Right ventricle myocardium superior (tissue), 1 donor: ENCODE measurements at regions of chr9 and their contacts with region 1.

Region 1: DNA sequence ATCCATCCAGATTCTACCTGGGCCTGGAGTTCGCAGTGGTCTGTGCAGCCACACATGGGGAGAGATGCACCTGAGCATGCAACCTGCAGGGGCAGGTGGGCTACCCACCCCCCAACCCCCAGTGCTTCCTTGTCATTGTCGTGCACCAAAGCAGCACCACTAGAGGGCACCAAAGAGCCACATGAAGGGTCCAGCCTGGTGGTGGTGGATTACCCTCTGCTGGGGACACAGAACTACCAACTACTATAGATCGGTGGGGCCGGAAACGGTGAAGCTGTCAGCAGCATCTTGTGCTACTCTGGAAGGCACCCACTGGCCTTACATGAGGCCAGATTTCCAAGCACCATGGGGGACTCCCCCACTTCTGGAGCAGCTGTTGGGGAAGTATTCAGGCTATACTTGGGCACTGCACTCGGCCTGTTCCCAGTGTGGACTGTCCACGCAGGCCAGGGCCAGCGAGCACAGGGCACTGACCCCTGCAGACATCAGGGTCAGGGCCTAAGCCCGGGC is 60.2 kb upstream of the TBC1D2 start:
- DNase-seq: peak; percentile 82
- ATAC-seq: peak; percentile 95

Region 2: DNA sequence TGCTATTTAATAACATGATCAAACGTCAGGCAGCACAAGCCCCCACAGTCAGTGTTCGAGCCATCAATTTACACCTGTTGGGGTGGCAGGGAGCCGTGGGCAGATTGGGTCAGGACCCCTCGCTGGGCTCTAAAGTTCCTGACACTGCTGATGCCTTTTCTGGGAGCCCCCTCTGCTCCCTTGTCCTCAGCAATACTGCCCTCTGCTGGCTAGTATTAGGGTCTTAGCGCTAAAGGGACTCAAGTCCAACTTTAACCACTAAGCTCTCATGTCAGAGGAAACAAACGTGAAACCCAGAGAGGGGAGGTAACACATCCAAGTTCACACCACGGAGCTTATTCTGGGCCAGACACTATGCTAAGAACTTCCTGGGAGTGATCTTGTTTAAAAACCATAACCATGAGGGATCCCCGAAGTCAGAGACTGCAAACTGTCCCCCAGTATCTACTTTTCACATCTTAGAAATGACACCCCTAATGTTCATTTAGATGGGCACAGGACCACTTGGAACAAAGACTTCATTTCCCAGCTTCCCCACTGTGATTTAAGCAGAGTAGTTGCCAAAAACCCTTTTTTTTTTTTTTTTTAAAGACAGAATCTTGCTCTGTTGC is 460.3 kb after region 1 on chr9:
- intact Hi-C with region 1: loop called (anchors 2 kb)
- DNase-seq: no peak
- ATAC-seq: peak; percentile 70

Region 3: DNA sequence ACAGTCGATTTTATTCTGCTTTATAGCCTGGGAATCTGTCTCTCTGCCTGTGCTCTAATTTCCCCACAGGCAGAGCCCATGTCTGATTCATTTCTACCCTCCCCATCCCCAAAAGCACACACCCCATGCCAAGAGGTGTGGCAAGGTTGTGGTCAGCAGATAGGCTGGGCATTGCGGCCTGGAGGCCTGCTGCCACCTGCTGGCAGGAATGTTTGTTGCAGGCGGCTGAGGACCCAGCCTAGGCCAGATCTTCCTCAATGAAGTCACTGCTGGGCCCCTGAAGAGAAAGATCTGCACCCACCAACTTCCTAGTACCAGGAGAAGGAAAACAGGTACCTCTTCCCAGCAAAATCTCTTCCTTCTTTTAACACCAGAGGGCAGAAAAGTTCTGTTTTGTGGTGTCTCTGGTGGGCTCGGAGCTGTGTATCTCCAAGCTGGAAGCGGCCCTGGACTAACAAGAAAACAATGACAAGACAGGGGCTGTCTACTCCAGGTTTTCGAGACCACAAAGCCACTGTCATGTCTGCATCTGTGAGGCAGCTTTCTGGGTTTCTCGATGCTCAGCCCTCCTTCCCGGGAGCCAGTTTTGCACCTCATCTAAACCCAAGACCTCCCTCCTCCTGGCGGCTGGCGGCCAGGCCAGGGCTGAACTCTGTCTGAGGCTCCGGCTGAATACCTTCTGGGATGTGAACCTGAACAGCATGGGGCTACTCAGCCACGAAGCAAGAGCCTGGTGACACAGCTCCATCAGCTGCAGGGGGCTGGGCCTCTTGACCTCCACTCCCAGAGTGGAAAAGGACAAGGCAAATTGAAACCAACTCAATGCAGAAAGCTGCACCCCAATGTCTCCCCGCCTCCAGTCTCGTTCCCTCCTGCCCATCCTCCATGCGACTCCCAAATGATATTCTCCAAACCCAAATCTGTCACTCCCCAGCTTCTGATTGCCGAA is 475.8 kb after region 1 on chr9:
- intact Hi-C with region 1: loop called (anchors 5 kb)
- DNase-seq: peak; percentile 89
- ATAC-seq: peak; percentile 90